IMR-90 (cell line): ENCODE measurements at regions of chr9 and their contacts with region 1.

Region 1: GRCh38 chr9:4297151-4297785 is 2.6 kb downstream of the GLIS3 start:
- DNase-seq: peak; percentile 87
- ATAC-seq: peak; percentile 22
- H3K4me3 ChIP-seq: peak overlapping the region; percentile 74
- H3K27ac ChIP-seq: peak overlapping the region; percentile 99
- H3K4me1 ChIP-seq: peaks cover 15% of the 10 kb centered on the region
- H3K27me3 ChIP-seq: no peaks in the 10 kb centered on the region
- CTCF ChIP-seq: peak; percentile 55
- POLR2A ChIP-seq: no peak; the same call in 1 of the 2 replicates
- RAD21 ChIP-seq: peak; percentile 37; the same call in 1 of the 2 replicates

Region 2: GRCh38 chr9:3467593-3468219 is 829.6 kb before region 1 on chr9:
- CTCF ChIA-PET with region 1: no interaction called
- POLR2A ChIA-PET with region 1: no interaction called
- dilution Hi-C with region 1: no loop called
- in situ Hi-C with region 1: no loop called
- intact Hi-C with region 1: loop called (anchors 5 kb)
- DNase-seq: peak; percentile 72
- ATAC-seq: peak; percentile 100
- H3K4me3 ChIP-seq: no peak overlapping the region
- H3K27ac ChIP-seq: no peak overlapping the region
- H3K4me1 ChIP-seq: no peaks in the 10 kb centered on the region
- H3K27me3 ChIP-seq: no peaks in the 10 kb centered on the region
- CTCF ChIP-seq: peak; percentile 91
- POLR2A ChIP-seq: peak; percentile 54; the same call in 1 of the 2 replicates
- RAD21 ChIP-seq: peak; percentile 95

Region 3: GRCh38 chr9:3857673-3858072 is 439.6 kb before region 1 on chr9:
- CTCF ChIA-PET with region 1: no interaction called
- POLR2A ChIA-PET with region 1: no interaction called
- dilution Hi-C with region 1: no loop called
- in situ Hi-C with region 1: no loop called
- intact Hi-C with region 1: loop called (anchors 5 kb)
- DNase-seq: peak; percentile 77
- ATAC-seq: peak; percentile 17; the same call in 1 of the 2 replicates
- H3K4me3 ChIP-seq: no peak overlapping the region
- H3K27ac ChIP-seq: no peak overlapping the region
- H3K4me1 ChIP-seq: no peaks in the 10 kb centered on the region; the same call in 1 of the 2 replicates
- H3K27me3 ChIP-seq: no peaks in the 10 kb centered on the region
- CTCF ChIP-seq: no peak
- POLR2A ChIP-seq: no peak
- RAD21 ChIP-seq: no peak

Region 4: DNA sequence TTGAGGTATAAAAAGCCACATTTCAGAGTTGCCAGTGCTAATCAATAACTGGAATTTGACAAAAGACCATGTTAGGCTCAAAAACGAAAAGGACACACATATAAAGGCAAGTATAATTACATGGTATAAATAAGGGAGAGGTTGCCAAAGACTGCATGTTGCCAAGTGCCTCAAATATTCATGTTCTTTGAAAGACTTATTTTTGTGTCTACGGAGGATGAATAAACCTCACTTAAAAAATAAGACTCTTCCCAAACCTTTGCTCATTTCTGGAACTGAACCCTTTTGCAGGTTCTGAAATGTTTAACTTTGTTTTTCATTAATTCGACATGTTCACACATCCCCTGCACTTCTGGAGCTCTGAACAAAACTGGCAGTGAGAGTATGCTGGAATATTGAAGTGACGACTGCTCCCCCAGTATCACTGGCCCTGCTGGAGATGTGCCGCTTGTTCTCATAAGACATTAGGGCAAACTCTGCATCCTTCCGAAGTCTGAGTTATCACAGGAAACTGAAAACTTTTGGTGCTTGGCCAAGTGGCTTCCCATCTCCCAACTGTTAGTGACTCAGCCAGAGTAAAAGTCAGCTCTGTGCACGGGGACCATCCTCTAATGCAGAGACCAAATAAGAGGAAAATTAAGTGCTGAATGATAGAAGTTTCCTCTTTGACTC is 334.2 kb before region 1 on chr9:
- CTCF ChIA-PET with region 1: no interaction called
- POLR2A ChIA-PET with region 1: no interaction called
- dilution Hi-C with region 1: no loop called
- in situ Hi-C with region 1: no loop called
- intact Hi-C with region 1: loop called (anchors 5 kb)
- DNase-seq: peak; percentile 93
- ATAC-seq: peak; percentile 80
- H3K4me3 ChIP-seq: no peak overlapping the region
- H3K27ac ChIP-seq: peak overlapping the region; percentile 73; the same call in 1 of the 2 replicates
- H3K4me1 ChIP-seq: peaks cover 14% of the 10 kb centered on the region
- H3K27me3 ChIP-seq: no peaks in the 10 kb centered on the region
- CTCF ChIP-seq: no peak
- POLR2A ChIP-seq: no peak
- RAD21 ChIP-seq: no peak

Region 5: DNA sequence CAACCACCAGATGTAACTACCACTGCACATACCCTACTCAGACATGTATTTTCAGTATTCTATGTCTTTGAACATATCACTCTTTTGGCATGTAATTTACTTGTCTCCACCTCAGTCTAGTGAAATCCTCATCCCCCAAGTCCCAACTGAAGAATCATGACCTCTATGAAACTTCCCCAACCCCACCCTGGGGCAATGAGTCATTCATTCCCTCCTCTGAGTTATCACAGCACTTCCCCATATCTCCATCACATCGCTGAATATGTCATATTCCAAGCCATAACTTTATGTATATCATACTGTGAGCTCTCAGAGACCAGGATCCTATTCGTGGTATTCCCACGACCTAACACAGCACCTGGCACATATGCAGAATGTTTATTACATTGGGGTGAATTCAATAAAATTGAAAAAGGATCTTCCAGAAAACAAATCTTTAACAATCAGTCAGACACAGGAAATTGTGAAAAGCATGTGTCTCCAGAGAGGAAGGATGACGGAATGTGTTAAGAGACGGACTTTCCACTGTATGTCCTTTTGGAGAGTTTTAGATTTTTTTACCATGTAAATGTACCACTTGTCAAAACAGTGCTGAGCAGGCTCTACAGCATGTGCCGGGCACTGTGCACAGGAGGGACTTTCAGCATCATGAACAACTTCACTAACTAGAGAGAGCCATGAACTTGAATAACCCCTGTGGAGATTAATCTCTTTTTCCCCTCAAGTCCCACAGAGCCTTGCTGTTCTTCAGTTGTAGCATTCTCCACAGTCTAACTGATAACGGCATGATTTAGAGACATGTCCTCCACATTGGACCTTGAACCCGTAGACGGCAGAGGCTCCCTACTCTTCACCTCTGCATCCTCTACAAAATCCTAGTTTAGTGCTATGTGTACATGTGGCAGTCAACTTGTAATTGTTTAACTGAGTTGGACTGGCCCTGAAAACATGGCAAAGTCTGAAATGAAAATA is 210.9 kb before region 1 on chr9:
- CTCF ChIA-PET with region 1: no interaction called
- POLR2A ChIA-PET with region 1: no interaction called
- dilution Hi-C with region 1: no loop called
- in situ Hi-C with region 1: no loop called
- intact Hi-C with region 1: loop called (anchors 2 kb)
- DNase-seq: peak; percentile 43
- ATAC-seq: no peak
- H3K4me3 ChIP-seq: no peak overlapping the region
- H3K27ac ChIP-seq: peak overlapping the region; percentile 42; the same call in 1 of the 2 replicates
- H3K4me1 ChIP-seq: peaks cover 12% of the 10 kb centered on the region
- H3K27me3 ChIP-seq: no peaks in the 10 kb centered on the region
- CTCF ChIP-seq: no peak
- POLR2A ChIP-seq: no peak
- RAD21 ChIP-seq: no peak

Region 6: GRCh38 chr9:4137234-4137633 is 160.0 kb before region 1 on chr9:
- CTCF ChIA-PET with region 1: interaction called, 3 read pairs
- POLR2A ChIA-PET with region 1: no interaction called
- dilution Hi-C with region 1: no loop called
- in situ Hi-C with region 1: no loop called
- intact Hi-C with region 1: loop called (anchors 1 kb)
- DNase-seq: peak; percentile 97
- ATAC-seq: peak; percentile 75
- H3K4me3 ChIP-seq: no peak overlapping the region
- H3K27ac ChIP-seq: peak overlapping the region; percentile 75
- H3K4me1 ChIP-seq: peaks cover 23% of the 10 kb centered on the region
- H3K27me3 ChIP-seq: no peaks in the 10 kb centered on the region
- CTCF ChIP-seq: no peak
- POLR2A ChIP-seq: no peak
- RAD21 ChIP-seq: 0 out of 2 replicates have a peak, but pooled peaks have one; percentile 10

Region 7: GRCh38 chr9:4180907-4181605 is 116.2 kb before region 1 on chr9:
- CTCF ChIA-PET with region 1: no interaction called
- POLR2A ChIA-PET with region 1: no interaction called
- dilution Hi-C with region 1: no loop called
- in situ Hi-C with region 1: no loop called
- intact Hi-C with region 1: no loop called
- DNase-seq: no peak
- ATAC-seq: no peak
- H3K4me3 ChIP-seq: no peak overlapping the region
- H3K27ac ChIP-seq: no peak overlapping the region
- H3K4me1 ChIP-seq: peaks cover 3% of the 10 kb centered on the region; the same call in 1 of the 2 replicates
- H3K27me3 ChIP-seq: no peaks in the 10 kb centered on the region
- CTCF ChIP-seq: no peak
- POLR2A ChIP-seq: no peak
- RAD21 ChIP-seq: no peak

Region 8: GRCh38 chr9:4315582-4316215 is 18.4 kb after region 1 on chr9:
- CTCF ChIA-PET with region 1: interaction called, 11 read pairs
- POLR2A ChIA-PET with region 1: no interaction called
- dilution Hi-C with region 1: no loop called
- in situ Hi-C with region 1: no loop called
- intact Hi-C with region 1: no loop called
- DNase-seq: peak; percentile 69
- ATAC-seq: peak; percentile 96
- H3K4me3 ChIP-seq: no peak overlapping the region
- H3K27ac ChIP-seq: no peak overlapping the region
- H3K4me1 ChIP-seq: peaks cover 4% of the 10 kb centered on the region; the same call in 1 of the 2 replicates
- H3K27me3 ChIP-seq: peaks cover 2% of the 10 kb centered on the region; the same call in 1 of the 2 replicates
- CTCF ChIP-seq: peak; percentile 93
- POLR2A ChIP-seq: no peak
- RAD21 ChIP-seq: peak; percentile 92